ENCODE measurements at regions of chr9 and their contacts with region 1.

Region 1: DNA sequence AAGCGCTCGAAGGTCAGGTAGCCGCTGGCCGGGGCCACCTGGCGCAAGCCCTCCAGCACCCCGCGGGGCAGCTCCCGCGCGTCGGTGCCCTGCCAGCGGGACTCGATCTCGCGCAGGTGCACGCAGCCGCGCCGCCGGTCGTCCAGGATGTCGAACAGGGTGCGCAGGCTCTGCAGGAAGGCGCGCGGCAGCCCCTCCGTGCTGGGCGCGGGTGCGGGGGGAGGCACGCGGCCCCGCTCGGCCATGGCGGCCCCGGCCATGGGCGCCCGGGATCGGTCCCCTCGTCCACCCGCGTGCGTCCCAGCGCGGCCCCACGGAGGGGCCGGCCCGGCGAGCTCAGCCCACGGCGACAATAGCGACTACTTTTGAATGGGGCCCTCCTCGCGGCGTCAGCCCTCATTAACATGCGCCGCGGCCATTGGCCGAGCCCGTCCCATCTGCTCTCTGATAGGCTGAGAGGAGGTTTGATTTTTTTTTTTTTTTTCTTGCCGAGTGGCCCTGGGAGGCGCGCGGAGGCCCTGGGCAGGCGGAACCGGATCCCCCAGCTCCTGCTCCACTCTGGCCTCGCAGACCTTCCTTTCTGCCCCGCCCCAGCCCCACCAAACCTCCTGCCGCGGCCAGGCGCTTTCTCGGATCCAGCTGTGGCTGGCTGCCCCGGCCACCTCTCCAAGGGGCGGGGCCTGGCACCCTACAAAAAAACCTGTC is at the start of gene SAPCD2:
- DNase-seq: peak; percentile 95
- H3K4me3 ChIP-seq: peak within 1 kb of the TSS; percentile 75
- H3K27ac ChIP-seq: peak within 1 kb of the TSS; percentile 57
- H3K4me1 ChIP-seq: peaks cover 29% of the 10 kb centered on the region
- CTCF ChIP-seq: no peak
- total RNA-seq, gene SAPCD2: 65.9 and 74.0 TPM in 2 replicates

Region 2: GRCh38 chr9:137007108-137007815 is 63.1 kb before region 1 on chr9:
- CTCF ChIA-PET with region 1: no interaction called
- POLR2A ChIA-PET with region 1: no interaction called
- intact Hi-C with region 1: no loop called
- DNase-seq: no peak
- H3K4me3 ChIP-seq: no peak overlapping the region
- H3K27ac ChIP-seq: no peak overlapping the region
- H3K4me1 ChIP-seq: peaks cover 4% of the 10 kb centered on the region
- CTCF ChIP-seq: no peak

Region 3: GRCh38 chr9:137046098-137046787 is 24.1 kb before region 1 on chr9 and contains the start of gene NPDC1:
- CTCF ChIA-PET with region 1: interaction called, 5 read pairs
- POLR2A ChIA-PET with region 1: interaction called, 3 read pairs
- intact Hi-C with region 1: loop called (anchors 2 kb)
- DNase-seq: peak; percentile 82
- H3K4me3 ChIP-seq: peak within 1 kb of the TSS; percentile 57
- H3K27ac ChIP-seq: no peak within 1 kb of the TSS
- H3K4me1 ChIP-seq: peaks cover 4% of the 10 kb centered on the region
- CTCF ChIP-seq: peak; percentile 81
- total RNA-seq, gene NPDC1: 0.21 and 0.32 TPM in 2 replicates

Region 4: DNA sequence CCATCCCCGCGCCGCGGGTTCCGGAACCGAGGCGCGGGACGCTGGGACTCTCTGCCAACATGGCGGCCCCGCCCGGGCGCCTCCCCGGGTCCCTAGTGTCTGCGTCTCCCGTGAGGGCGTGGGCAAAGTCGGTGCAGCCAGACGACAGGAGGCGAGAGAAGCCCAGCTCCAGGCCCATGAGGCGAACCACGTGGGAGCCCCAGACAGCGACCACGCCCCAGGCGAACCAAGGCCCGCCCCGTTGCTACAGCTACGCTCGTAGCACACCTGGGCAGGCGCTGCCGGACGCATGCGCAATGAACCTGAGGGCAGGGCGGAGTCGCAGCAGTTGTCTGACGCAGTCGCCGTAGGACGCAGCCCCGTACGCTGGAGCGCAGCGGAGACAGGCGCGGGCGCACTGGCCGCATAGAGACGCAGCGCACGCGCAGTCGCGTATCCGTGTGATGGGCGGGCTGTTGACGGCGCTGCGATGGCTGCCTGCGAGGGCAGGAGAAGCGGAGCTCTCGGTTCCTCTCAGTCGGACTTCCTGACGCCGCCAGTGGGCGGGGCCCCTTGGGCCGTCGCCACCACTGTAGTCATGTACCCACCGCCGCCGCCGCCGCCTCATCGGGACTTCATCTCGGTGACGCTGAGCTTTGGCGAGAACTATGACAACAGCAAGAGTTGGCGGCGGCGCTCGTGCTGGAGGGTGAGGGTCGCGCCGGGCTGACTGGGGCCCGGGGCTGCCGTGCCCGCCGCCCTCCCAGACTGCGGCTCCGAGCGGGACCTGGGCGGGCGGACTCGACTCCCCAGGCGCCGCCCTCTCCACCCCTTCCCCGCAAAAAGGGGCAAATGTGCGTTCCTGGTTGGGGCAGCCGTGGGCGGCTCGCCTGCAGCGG is 16.4 kb after region 1 on chr9 and contains the start of gene MAN1B1:
- CTCF ChIA-PET with region 1: interaction called, 6 read pairs
- POLR2A ChIA-PET with region 1: interaction called, 13 read pairs
- intact Hi-C with region 1: loop called (anchors 1 kb)
- DNase-seq: peak; percentile 99
- H3K4me3 ChIP-seq: peak within 1 kb of the TSS; percentile 77
- H3K27ac ChIP-seq: peak within 1 kb of the TSS; percentile 53
- H3K4me1 ChIP-seq: peaks cover 24% of the 10 kb centered on the region
- CTCF ChIP-seq: no peak
- total RNA-seq, gene MAN1B1: 22.5 and 32.7 TPM in 2 replicates

Region 5: DNA sequence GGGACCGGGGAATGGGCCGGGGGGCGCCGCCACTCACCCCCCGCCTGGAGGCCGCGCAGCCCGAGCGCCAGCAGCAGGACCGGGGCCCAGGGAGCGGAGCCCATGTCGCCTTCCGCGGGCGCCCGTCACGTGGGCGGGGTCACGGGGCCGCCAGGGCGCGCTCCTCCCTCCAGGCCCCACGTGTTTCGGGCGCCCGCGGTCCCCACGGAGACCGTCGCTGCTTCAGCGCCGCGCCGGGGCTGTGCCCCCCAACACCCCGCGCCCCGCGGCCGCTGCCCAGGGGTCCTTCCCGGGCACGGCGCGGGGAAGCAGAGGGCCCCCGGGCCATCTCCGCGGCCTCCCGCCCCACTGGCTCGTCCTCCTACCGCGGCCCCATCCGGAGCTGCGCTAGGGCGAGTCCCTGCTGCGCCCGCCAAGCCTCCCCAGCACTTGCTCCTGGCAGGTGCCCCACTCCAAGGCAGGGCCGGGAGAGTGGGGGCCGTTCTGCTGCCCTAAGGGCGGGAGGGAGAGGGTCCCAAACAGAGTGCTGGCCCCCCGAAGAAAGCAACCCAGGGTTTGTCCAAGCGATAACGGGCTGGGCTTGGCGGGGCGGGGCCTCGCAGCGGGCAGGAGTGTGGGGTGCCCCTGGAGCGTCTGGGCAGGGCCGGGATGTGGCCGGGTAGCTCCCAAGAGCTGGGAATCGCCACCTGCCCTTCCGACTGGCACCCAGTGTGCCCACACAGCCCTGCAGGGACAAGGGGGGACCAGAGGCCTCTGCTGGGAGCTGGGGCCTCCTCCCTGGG is 44.4 kb after region 1 on chr9 and contains the start of gene DPP7:
- CTCF ChIA-PET with region 1: interaction called, 3 read pairs
- POLR2A ChIA-PET with region 1: interaction called, 5 read pairs
- intact Hi-C with region 1: loop called (anchors 2 kb)
- DNase-seq: peak; percentile 82
- H3K4me3 ChIP-seq: peak within 1 kb of the TSS; percentile 95
- H3K27ac ChIP-seq: peak within 1 kb of the TSS; percentile 42
- H3K4me1 ChIP-seq: peaks cover 34% of the 10 kb centered on the region
- CTCF ChIP-seq: no peak
- total RNA-seq, gene DPP7: 173 and 182 TPM in 2 replicates

Region 6: GRCh38 chr9:137223078-137223970 is 153.0 kb after region 1 on chr9:
- CTCF ChIA-PET with region 1: no interaction called
- POLR2A ChIA-PET with region 1: interaction called, 4 read pairs
- intact Hi-C with region 1: loop called (anchors 2 kb)
- DNase-seq: peak; percentile 100
- H3K4me3 ChIP-seq: peak overlapping the region; percentile 91
- H3K27ac ChIP-seq: peak overlapping the region; percentile 65
- H3K4me1 ChIP-seq: peaks cover 26% of the 10 kb centered on the region
- CTCF ChIP-seq: no peak

Region 7: DNA sequence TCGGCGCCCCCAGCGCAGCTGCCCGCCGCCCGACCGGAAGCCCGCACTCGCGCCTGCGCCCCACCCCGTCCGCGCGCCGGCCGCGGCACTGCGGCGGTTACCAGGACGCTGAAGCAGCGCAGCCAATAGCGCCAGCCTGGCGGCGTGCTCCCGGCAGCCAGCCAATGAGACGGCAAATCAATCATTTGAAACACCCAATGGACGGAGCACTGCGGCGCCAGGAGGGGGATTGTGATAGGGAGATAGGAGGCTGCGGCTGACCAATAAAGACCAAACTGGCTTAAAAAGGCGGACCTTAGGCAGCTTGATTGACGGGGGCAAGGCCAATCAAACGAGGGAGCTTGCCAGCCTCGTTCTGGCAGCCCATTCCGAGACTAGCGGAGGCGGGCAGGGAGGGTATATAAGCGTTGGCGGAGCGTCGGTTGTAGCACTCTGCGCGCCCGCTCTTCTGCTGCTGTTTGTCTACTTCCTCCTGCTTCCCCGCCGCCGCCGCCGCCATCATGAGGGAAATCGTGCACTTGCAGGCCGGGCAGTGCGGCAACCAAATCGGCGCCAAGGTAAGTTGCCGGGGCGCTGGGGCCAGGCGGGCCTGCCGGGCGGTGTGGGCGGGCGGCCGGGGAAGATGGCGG is 170.6 kb after region 1 on chr9 and contains the start of gene TUBB4B:
- CTCF ChIA-PET with region 1: no interaction called
- POLR2A ChIA-PET with region 1: interaction called, 3 read pairs
- intact Hi-C with region 1: loop called (anchors 2 kb)
- DNase-seq: peak; percentile 100
- H3K4me3 ChIP-seq: peak within 1 kb of the TSS; percentile 98
- H3K27ac ChIP-seq: peak within 1 kb of the TSS; percentile 89
- H3K4me1 ChIP-seq: peaks cover 54% of the 10 kb centered on the region
- CTCF ChIP-seq: no peak
- total RNA-seq, gene TUBB4B: 376 and 417 TPM in 2 replicates